AG04450 (cell line): ENCODE measurements at regions of chr1 and their contacts with region 1.

Region 1: DNA sequence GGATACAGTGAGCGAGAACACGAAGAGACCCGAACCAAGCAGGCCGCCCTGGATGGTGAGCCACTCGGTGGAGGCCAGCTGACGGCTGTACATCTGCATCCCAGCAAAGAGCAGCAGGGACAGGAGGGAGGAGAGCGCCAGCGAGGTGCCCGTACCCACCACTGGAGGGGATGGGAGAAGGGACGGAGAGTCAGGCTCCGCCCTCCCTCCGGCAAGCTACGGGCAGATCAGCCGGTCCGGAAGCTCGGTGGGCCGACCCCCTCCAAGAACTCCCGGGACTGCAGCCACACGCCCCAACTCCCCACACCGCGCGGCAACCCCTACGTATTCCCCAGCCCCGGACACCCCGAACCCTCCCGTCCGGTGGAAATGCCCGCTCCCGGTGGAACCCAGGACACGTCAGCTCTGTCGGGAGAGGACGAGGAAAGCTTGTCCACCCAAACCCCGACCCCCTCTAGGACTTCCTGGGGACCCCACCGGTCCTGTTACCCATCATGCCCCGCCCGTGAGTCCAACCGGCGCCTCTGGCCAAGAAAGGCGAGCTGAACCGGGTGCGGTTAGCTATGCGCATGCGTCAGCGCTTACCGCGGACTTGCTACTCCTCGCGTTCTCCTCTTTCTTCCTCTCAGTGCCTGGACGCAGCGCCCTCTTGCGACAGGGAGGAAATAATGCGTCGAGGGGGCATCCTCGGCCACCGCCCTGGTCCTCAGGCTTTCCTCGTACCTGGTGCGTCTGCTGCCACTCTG is at the start of gene KRTCAP2:
- DNase-seq: peak; percentile 93
- H3K4me3 ChIP-seq: peak within 1 kb of the TSS; percentile 99
- H3K27ac ChIP-seq: peak within 1 kb of the TSS; percentile 92
- H3K27me3 ChIP-seq: no peaks in the 10 kb centered on the region
- CTCF ChIP-seq: peak; percentile 96
- polyA plus RNA-seq, gene KRTCAP2: 102 and 131 TPM in 2 replicates

Region 2: GRCh38 chr1:155091071-155091709 is 81.7 kb before region 1 on chr1:
- CTCF ChIA-PET with region 1: interaction called, 317 read pairs
- POLR2A ChIA-PET with region 1: interaction called, 9 read pairs
- DNase-seq: no peak
- H3K4me3 ChIP-seq: no peak overlapping the region
- H3K27ac ChIP-seq: no peak overlapping the region
- H3K27me3 ChIP-seq: peaks cover 17% of the 10 kb centered on the region
- CTCF ChIP-seq: peak; percentile 93

Region 3: DNA sequence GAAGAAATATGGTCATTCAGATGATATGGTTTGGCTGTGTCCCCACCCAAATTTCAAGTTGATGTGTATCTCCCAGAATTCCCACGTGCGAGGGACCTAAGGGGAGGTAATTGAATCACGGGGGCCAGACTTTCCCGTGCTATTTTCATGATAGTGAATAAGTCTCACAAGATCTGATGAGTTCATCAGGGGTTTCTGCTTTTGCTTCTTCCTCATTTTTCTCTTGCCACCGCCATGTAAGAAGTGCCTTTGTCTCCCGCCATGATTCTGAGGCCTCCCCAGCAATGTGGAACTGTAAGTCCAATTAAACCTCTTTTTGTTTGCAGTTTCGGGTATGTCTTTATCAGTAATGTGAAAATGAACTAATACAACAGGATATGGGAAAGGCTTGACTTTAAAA is 31.2 kb before region 1 on chr1:
- CTCF ChIA-PET with region 1: interaction called, 10 read pairs
- POLR2A ChIA-PET with region 1: interaction called, 3 read pairs
- DNase-seq: no peak
- H3K4me3 ChIP-seq: no peak overlapping the region
- H3K27ac ChIP-seq: no peak overlapping the region
- H3K27me3 ChIP-seq: peaks cover 19% of the 10 kb centered on the region
- CTCF ChIP-seq: no peak

Region 4: GRCh38 chr1:155193275-155193990 is 20.5 kb after region 1 on chr1:
- CTCF ChIA-PET with region 1: interaction called, 69 read pairs
- POLR2A ChIA-PET with region 1: interaction called, 10 read pairs
- DNase-seq: peak; percentile 64
- H3K4me3 ChIP-seq: peak overlapping the region; percentile 64
- H3K27ac ChIP-seq: peak overlapping the region; percentile 87
- H3K27me3 ChIP-seq: no peaks in the 10 kb centered on the region
- CTCF ChIP-seq: peak; percentile 97

Region 5: GRCh38 chr1:155329971-155330598 is 157.2 kb after region 1 on chr1:
- CTCF ChIA-PET with region 1: no interaction called
- POLR2A ChIA-PET with region 1: interaction called, 10 read pairs
- DNase-seq: no peak
- H3K4me3 ChIP-seq: no peak overlapping the region
- H3K27ac ChIP-seq: no peak overlapping the region
- H3K27me3 ChIP-seq: no peaks in the 10 kb centered on the region
- CTCF ChIP-seq: no peak